ENCODE measurements at regions of chr19 and their contacts with region 1.

Region 1: DNA sequence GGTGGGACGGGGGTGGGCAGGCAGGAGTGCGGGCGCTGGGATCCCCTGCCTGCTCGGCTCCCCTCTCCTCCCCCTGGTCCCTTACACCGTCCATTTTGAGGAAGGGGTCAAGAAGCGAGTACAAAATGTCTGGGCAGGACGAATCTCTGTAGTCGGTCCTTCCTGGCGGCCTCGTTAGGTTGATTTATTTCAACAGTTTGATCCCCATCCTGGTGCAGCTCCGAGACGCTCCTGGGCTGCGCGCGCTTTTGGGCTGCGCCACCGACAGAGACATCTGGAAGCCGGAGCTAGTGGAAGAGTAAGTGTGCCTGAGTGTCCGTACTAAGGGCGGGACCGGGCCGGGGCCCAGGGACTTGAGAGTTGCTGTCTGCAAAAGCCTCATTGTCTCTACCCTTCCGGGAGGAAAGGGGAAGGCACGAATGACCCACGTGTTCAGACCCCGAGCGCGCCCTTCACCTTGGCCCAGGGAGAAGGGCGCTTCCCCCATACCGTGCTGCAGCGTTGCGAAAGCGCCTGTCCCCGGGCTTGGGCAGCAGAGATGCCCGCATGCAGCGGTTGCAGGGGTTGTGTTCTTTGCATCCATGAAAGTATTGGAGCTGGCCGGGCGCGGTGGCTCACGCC is 1.8 kb downstream of the ZNF114 start:
- DNase-seq: peak; percentile 81
- H3K4me3 ChIP-seq: peak overlapping the region; percentile 50 to 62
- H3K27ac ChIP-seq: peak overlapping the region in 1 of 2 experiments; percentile 72; a peak in 2 of 4 replicates
- H3K4me1 ChIP-seq: no peaks in the 10 kb centered on the region
- H3K27me3 ChIP-seq: no peaks in the 10 kb centered on the region
- CTCF ChIP-seq: no peak
- EP300 ChIP-seq: no peak
- RAD21 ChIP-seq: no peak

Region 2: DNA sequence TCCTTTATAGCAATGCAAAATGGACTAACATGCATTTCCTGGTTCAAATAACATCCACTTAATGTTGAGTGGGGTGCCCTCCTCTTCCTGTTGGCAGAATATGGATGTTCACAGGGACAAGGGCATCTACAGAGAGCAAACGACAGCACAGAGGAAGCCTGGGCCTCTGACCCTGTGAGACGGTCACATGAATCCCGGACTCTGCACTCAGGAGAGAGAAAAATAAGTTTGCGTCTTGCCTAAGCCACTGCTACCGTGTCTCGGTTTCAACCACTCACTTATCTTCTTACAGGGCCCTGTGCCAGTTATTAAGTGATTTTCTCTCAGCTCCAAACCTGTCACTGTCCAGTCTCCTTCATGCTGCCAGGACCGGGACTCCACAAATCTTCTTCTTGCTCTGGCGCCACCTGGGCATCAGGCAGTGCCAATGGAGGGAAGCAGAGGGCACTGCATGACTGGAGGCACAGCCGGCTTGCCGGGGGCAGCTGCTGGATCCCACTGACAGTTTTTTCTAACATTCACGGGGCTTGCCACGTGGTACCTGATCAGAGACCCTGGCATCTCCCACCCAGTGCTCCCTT is 113.3 kb before region 1 on chr19:
- CTCF ChIA-PET with region 1: no interaction called
- POLR2A ChIA-PET with region 1: no interaction called
- DNase-seq: no peak
- H3K4me3 ChIP-seq: no peak overlapping the region
- H3K27ac ChIP-seq: no peak overlapping the region
- H3K4me1 ChIP-seq: no peaks in the 10 kb centered on the region
- H3K27me3 ChIP-seq: no peaks in the 10 kb centered on the region
- CTCF ChIP-seq: no peak
- EP300 ChIP-seq: no peak
- RAD21 ChIP-seq: no peak

Region 3: GRCh38 chr19:48230555-48231129 is 41.0 kb before region 1 on chr19:
- CTCF ChIA-PET with region 1: no interaction called
- POLR2A ChIA-PET with region 1: no interaction called
- DNase-seq: no peak
- H3K4me3 ChIP-seq: no peak overlapping the region
- H3K27ac ChIP-seq: no peak overlapping the region
- H3K4me1 ChIP-seq: no peaks in the 10 kb centered on the region
- H3K27me3 ChIP-seq: no peaks in the 10 kb centered on the region
- CTCF ChIP-seq: no peak
- EP300 ChIP-seq: no peak
- RAD21 ChIP-seq: no peak

Region 4: GRCh38 chr19:48255376-48256303 is 16.0 kb before region 1 on chr19 and contains the start of gene CARD8:
- CTCF ChIA-PET with region 1: interaction called, 26 read pairs
- POLR2A ChIA-PET with region 1: interaction called, 3 read pairs
- DNase-seq: peak; percentile 73
- H3K4me3 ChIP-seq: peak within 1 kb of the TSS; percentile 76 to 84
- H3K27ac ChIP-seq: peak within 1 kb of the TSS; percentile 93 to 95
- H3K4me1 ChIP-seq: peaks cover 0 to 14% of the 10 kb centered on the region in 2 experiments; a peak in 3 of 4 replicates
- H3K27me3 ChIP-seq: no peaks in the 10 kb centered on the region
- CTCF ChIP-seq: no peak
- EP300 ChIP-seq: no peak; a peak in 1 of 4 replicates
- RAD21 ChIP-seq: no peak
- polyA plus RNA-seq, gene CARD8: 16.4 and 21.7 TPM in 2 replicates

Region 5: GRCh38 chr19:48290771-48291488 is 19.3 kb after region 1 on chr19:
- CTCF ChIA-PET with region 1: interaction called, 159 read pairs
- POLR2A ChIA-PET with region 1: interaction called, 3 read pairs
- DNase-seq: peak; percentile 86
- H3K4me3 ChIP-seq: peak overlapping the region; percentile 48 to 61
- H3K27ac ChIP-seq: peak overlapping the region in 1 of 2 experiments; percentile 39; a peak in 1 of 4 replicates
- H3K4me1 ChIP-seq: peaks cover 4% of the 10 kb centered on the region in 2 experiments; a peak in 1 of 4 replicates
- H3K27me3 ChIP-seq: no peaks in the 10 kb centered on the region
- CTCF ChIP-seq: peak; percentile 97
- EP300 ChIP-seq: no peak
- RAD21 ChIP-seq: peak; percentile 80

Region 6: GRCh38 chr19:48321622-48322591 is 50.3 kb after region 1 on chr19:
- CTCF ChIA-PET with region 1: no interaction called
- POLR2A ChIA-PET with region 1: no interaction called
- DNase-seq: peak; percentile 99
- H3K4me3 ChIP-seq: peak overlapping the region; percentile 64 to 67
- H3K27ac ChIP-seq: peak overlapping the region; percentile 97
- H3K4me1 ChIP-seq: peaks cover 14 to 32% of the 10 kb centered on the region in 2 experiments
- H3K27me3 ChIP-seq: no peaks in the 10 kb centered on the region
- CTCF ChIP-seq: no peak
- EP300 ChIP-seq: 0 out of 4 replicates have a peak, but pooled peaks of 1 of the 2 experiments have one; percentile 33
- RAD21 ChIP-seq: no peak